Calu3 (cell line): ENCODE measurements at regions of chr2 and their contacts with region 1.

Region 1: DNA sequence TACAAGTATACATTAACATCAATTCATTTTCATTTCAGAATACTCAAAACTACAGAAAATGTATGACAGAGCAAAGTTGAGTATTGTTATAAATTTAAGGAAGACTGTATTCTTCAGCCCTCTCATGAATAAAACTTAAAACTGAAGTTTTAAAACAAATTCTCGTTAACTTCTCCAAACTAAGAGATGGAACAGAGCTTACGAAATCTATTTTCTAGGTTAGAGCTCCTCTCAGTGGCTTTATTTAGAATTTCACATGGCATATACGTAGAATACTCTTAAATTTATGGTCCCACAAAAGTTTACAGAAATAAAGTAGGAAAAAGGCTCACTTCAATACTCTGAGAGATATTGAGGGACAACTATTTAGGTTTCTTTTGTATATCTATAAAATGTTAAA is 612.1 kb downstream of the KCNJ3 start:
- DNase-seq: no peak
- H3K4me3 Mint-ChIP-seq: no peak overlapping the region
- H3K27ac Mint-ChIP-seq: no peak overlapping the region
- H3K4me1 Mint-ChIP-seq: no peaks in the 10 kb centered on the region
- H3K27me3 Mint-ChIP-seq: no peaks in the 10 kb centered on the region
- CTCF ChIP-seq: peak; percentile 34

Region 2: DNA sequence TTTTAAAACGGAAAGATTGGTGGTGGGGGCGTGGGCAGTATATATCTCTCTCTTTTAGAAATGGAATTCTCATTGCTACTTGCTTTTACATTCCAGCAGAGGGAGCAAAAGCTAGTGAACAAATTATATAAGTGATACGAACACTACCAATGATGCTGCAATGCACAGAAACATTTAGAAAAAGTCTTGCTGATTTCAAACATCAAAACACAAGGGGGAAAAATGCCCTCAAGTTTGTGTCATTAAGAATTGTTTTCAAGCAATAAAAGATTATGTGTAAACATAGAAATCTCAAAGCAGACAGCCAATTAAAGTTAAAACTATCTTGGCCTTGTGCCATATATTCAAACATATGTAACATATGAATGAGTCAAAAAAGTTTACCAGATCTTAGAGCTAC is 908.4 kb before region 1 on chr2:
- CTCF ChIA-PET with region 1: no interaction called
- intact Hi-C with region 1: loop called (anchors 1 kb)
- DNase-seq: no peak
- H3K4me3 Mint-ChIP-seq: no peak overlapping the region
- H3K27ac Mint-ChIP-seq: no peak overlapping the region
- H3K4me1 Mint-ChIP-seq: no peaks in the 10 kb centered on the region
- H3K27me3 Mint-ChIP-seq: no peaks in the 10 kb centered on the region
- CTCF ChIP-seq: peak; percentile 53

Region 3: GRCh38 chr2:154439156-154439555 is 871.4 kb before region 1 on chr2:
- CTCF ChIA-PET with region 1: interaction called, 8 read pairs
- intact Hi-C with region 1: loop called (anchors 2 kb)
- DNase-seq: no peak
- H3K4me3 Mint-ChIP-seq: no peak overlapping the region
- H3K27ac Mint-ChIP-seq: no peak overlapping the region
- H3K4me1 Mint-ChIP-seq: no peaks in the 10 kb centered on the region
- H3K27me3 Mint-ChIP-seq: no peaks in the 10 kb centered on the region
- CTCF ChIP-seq: no peak

Region 4: DNA sequence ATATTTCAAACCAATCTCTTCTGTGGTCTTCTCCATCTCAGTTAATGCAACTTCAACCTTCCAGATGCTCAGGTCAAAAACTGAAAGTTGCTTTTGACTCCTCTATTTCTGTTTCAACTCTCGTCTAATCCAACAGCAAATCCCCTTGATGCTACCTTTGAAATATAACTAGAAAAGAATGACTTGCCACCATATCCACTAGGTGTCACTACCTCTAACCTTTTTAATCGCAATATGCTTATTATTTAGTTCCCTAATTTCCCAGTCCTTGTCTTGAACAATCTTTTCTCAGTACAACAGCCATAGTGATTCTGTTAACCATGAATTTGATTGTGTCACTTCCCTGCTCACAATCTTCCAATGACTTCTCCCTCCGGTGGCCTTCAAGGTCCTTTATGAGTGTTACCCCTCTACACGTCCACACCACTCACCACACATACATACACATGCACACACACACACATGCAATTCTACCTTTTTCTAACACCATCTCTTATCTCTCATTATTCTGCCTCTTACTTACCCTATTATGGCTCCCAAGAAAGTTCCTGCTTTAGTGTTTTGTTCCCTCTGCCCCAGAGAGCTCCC is 857.6 kb before region 1 on chr2:
- CTCF ChIA-PET with region 1: no interaction called
- intact Hi-C with region 1: loop called (anchors 1 kb)
- DNase-seq: no peak
- H3K4me3 Mint-ChIP-seq: no peak overlapping the region
- H3K27ac Mint-ChIP-seq: no peak overlapping the region
- H3K4me1 Mint-ChIP-seq: no peaks in the 10 kb centered on the region
- H3K27me3 Mint-ChIP-seq: no peaks in the 10 kb centered on the region
- CTCF ChIP-seq: peak; percentile 32

Region 5: DNA sequence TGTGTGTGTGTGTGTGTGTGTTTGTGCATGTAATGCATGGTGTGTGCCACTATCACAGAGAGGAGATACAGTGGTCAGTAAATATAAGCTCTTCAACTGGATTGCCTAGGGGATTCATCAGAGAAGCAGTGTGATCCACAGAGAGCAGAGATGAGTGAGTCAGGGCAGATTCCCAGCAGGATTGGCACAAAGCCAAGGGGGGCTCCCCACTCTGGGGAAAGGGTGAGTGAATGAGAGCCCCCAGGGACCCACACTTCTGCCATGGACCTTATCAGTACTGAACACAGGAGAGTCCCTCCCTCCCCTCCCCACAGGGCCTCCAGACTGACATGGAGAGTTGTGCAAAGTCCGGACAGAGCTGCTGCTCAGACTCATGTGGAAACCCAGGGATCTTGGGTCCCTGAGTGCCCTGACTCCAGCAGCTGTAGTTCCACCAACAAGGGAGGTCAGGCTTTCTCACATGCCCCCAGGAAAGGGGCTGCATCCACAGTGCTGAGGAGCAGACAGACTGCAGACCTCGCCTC is 273.1 kb after region 1 on chr2:
- CTCF ChIA-PET with region 1: no interaction called
- intact Hi-C with region 1: no loop called
- DNase-seq: no peak
- H3K4me3 Mint-ChIP-seq: no peak overlapping the region
- H3K27ac Mint-ChIP-seq: no peak overlapping the region
- H3K4me1 Mint-ChIP-seq: no peaks in the 10 kb centered on the region
- H3K27me3 Mint-ChIP-seq: no peaks in the 10 kb centered on the region
- CTCF ChIP-seq: no peak